CD8-positive, alpha-beta T cell (primary cell): ENCODE measurements at regions of chr6 and their contacts with region 1.

Region 1: DNA sequence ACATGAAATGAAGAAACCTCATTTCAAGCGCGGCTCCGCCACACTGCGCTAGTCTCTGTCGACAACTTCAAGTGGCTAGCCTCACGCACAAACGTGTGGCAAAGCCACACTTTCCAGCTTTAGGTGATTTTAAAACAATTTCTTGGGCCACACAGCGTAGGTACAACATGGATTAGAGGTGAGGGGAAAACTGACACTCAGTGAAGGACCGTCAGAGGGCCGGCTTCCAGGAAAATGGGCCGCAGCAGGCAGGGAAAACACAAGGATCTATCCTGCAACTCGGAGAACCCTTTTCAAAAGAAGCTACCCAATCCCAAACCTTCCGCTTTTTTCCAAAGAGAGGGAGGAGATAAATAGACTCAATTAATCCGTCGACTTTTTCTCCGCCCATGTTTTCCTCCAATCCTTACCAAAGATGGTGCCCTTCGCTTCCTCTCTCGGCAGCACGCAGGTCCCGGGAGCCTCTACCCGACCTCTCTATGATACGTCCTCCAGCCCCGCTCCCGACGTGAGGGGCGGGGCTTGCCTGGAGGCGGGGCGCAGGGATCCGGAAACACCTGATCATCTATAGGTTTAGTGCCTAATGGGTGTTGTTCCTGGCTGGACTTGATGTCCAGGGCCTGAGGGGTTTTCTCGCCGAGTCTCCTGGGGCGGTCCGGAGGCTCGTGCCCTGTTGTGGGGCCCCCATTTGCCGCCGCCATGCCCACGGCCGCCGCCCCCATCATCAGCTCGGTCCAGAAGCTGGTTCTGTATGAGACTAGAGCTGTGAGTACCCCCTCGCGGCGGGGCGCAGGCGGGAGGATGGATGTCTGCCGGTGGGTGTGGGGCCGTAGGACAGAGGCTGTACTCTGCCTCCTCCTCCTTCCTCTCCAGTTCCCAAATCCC is at the starts of genes AK9 and FIG4:
- DNase-seq: peak; percentile 68 to 93 (median 90)
- ATAC-seq: peak; percentile 96
- H3K4me3 ChIP-seq: peak within 1 kb of the TSS; percentile 85 to 91
- H3K4me3 Mint-ChIP-seq: peak within 1 kb of the TSS; percentile 93
- H3K27ac ChIP-seq: peak within 1 kb of the TSS; percentile 81 to 91
- H3K27ac Mint-ChIP-seq: peak within 1 kb of the TSS; percentile 98
- H3K4me1 ChIP-seq: peaks cover 22% of the 10 kb centered on the region
- H3K4me1 Mint-ChIP-seq: peaks cover 27% of the 10 kb centered on the region
- H3K27me3 ChIP-seq: no peaks in the 10 kb centered on the region
- H3K27me3 Mint-ChIP-seq: no peaks in the 10 kb centered on the region
- CTCF ChIP-seq: no peak
- total RNA-seq, gene AK9: 5.1 to 6.5 TPM
- total RNA-seq, gene FIG4: 2.3 TPM

Region 2: DNA sequence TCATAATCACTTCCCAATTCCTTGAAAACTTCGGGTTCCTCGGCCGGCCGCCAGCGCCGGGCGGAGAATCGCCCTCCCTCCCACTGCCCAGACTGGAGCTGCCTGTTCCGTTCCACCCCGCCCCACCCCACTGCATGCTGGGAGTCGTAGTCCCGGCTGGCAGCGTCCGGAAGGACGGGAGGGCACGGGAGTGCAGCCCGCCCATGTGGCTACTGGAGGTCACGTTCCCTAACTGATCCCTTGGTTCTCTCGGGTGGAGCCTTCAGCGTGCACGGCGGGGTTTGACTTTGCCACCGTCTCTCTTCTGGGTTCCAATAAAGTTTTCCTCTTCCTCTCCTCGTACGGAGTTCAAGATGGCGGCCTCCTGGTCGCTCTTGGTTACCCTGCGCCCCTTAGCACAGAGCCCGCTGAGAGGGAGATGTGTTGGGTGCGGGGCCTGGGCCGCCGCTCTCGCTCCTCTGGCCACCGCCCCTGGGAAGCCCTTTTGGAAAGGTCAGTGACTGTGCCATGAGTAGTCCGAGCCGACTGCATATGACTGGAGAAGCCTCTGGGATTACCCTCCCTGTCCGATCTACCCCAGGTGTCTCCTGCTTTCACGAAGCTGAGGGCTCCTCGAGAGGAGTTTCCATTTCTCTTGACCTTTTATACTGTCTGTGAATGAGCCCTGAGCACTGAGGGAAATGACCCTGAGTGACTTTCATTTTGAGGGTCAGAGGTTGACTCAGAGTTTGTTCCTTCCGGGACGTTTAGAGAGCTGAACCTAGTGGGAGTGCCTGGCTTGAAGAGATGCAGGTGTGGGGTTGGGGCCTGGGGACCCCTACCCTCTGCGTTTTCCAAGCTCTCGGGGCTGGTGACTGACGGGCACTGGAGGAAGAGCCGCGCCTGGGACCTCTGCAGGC is 1396.0 kb before region 1 on chr6 and contains the start of gene AFG1L:
- CTCF ChIA-PET with region 1: no interaction called
- POLR2A ChIA-PET with region 1: no interaction called
- intact Hi-C with region 1: loop called in 1 of 2 experiments (anchors 10 kb)
- DNase-seq: peak; percentile 72 to 92 (median 86)
- ATAC-seq: peak; percentile 92
- H3K4me3 ChIP-seq: peak within 1 kb of the TSS; percentile 94 to 96
- H3K4me3 Mint-ChIP-seq: peak within 1 kb of the TSS; percentile 89
- H3K27ac ChIP-seq: peak within 1 kb of the TSS; percentile 94 to 95
- H3K27ac Mint-ChIP-seq: peak within 1 kb of the TSS; percentile 97
- H3K4me1 ChIP-seq: peaks cover 13% of the 10 kb centered on the region
- H3K4me1 Mint-ChIP-seq: peaks cover 26% of the 10 kb centered on the region
- H3K27me3 ChIP-seq: no peaks in the 10 kb centered on the region
- H3K27me3 Mint-ChIP-seq: no peaks in the 10 kb centered on the region
- CTCF ChIP-seq: no peak
- total RNA-seq, gene AFG1L: 3.3 to 4.0 TPM

Region 3: DNA sequence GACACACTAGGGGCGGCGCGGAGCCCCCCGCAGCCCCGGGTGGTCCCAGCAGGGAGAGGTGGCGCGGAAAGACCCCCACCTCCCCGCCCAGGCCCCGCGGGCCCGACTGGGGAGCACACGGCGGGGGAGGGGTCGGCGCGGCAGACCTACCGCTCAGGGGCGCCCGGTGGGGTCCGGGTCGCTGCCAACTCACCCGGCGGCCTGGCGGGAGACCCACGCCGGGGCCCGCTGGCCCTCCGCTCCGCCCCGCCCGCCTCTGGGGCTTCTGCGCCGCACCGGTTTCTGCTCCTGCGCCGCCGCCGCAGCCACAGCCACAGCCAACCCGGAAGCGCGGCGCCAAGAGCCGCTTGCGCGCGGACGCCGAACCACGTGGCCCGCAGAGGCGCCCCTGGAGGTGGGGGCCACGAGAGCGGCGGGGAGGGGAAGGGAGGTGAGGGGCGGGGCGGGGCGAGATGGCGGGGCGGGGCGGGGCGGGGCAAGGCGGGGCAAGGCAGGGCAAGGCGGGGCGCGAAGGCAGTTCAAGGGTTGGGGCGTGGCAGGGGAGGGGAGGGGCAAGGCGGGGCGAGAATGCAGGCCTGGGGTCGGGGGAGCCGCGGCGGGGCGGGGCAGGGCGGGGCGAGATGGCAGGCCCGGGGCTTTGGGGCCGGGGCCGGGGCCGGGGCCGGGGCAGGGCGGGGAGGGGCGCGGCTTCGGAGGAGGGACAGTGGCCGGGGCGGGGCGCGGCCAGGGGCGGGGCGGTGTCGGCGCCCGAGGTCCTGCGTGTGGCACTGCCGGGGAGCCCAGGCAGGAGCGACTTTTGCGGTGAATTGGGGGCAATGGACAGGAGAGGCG is 207.9 kb before region 1 on chr6 and contains the start of gene ZBTB24:
- CTCF ChIA-PET with region 1: no interaction called
- POLR2A ChIA-PET with region 1: no interaction called
- intact Hi-C with region 1: loop called (anchors 1 to 2 kb)
- DNase-seq: peak; percentile 75 to 96 (median 88)
- ATAC-seq: peak; percentile 85
- H3K4me3 ChIP-seq: peak within 1 kb of the TSS; percentile 65 to 69
- H3K4me3 Mint-ChIP-seq: peak within 1 kb of the TSS; percentile 95
- H3K27ac ChIP-seq: peak within 1 kb of the TSS; percentile 49 to 62
- H3K27ac Mint-ChIP-seq: peak within 1 kb of the TSS; percentile 89
- H3K4me1 ChIP-seq: peaks cover 37% of the 10 kb centered on the region
- H3K4me1 Mint-ChIP-seq: peaks cover 50% of the 10 kb centered on the region
- H3K27me3 ChIP-seq: no peaks in the 10 kb centered on the region
- H3K27me3 Mint-ChIP-seq: no peaks in the 10 kb centered on the region
- CTCF ChIP-seq: no peak
- total RNA-seq, gene ZBTB24: 10.9 to 11.2 TPM

Region 4: GRCh38 chr6:109705258-109705657 is 14.3 kb after region 1 on chr6:
- CTCF ChIA-PET with region 1: interaction called, 8 read pairs
- POLR2A ChIA-PET with region 1: interaction called, 3 read pairs
- intact Hi-C with region 1: loop called in 1 of 2 experiments (anchors 1 kb)
- DNase-seq: peak; percentile 50 to 90 (median 72)
- ATAC-seq: peak; percentile 98
- H3K4me3 ChIP-seq: no peak overlapping the region
- H3K4me3 Mint-ChIP-seq: no peak overlapping the region
- H3K27ac ChIP-seq: no peak overlapping the region
- H3K27ac Mint-ChIP-seq: no peak overlapping the region
- H3K4me1 ChIP-seq: peaks cover 10% of the 10 kb centered on the region
- H3K4me1 Mint-ChIP-seq: peaks cover 27% of the 10 kb centered on the region
- H3K27me3 ChIP-seq: no peaks in the 10 kb centered on the region
- H3K27me3 Mint-ChIP-seq: no peaks in the 10 kb centered on the region
- CTCF ChIP-seq: peak; percentile 82

Region 5: DNA sequence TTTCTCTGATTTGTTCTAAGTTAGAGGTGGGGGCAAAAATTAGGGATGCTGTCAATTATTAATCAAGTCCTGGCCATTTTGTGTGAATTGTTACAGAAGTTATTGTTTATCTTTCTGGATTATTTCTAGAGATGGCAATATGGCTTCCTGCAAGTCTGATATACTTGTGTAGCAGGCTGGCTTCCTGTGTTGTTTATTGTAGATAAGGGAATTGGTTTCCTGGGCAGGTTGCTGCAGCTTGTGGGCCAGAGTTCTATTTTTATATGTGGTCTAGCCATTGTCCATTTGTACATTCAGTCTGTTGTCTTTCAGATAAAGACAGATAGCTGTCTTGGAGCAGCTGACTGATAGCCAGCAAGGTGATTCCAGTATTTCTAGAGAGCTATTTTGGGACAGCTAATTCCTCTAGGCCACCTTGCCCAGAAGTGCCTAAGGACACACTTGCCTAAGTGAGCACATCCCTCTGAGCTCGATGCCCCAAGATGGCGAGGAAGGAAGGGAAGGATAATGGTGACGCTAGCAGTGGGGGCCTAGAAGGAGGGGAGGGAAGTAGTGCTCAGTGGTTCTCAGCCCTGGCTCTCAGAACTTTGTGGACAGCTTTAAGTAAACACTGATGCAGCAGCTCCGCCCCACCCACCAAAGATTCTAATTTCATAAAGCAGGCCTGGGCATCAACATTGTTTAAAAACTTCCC is 698.9 kb after region 1 on chr6:
- CTCF ChIA-PET with region 1: interaction called, 13 read pairs
- POLR2A ChIA-PET with region 1: no interaction called
- intact Hi-C with region 1: no loop called
- DNase-seq: peak in 3 of 9 experiments; percentile 14 to 53 (median 36)
- ATAC-seq: peak; percentile 45
- H3K4me3 ChIP-seq: no peak overlapping the region
- H3K4me3 Mint-ChIP-seq: peak overlapping the region; percentile 35
- H3K27ac ChIP-seq: peak overlapping the region in 1 of 2 experiments; percentile 26
- H3K27ac Mint-ChIP-seq: peak overlapping the region; percentile 93
- H3K4me1 ChIP-seq: peaks cover 33% of the 10 kb centered on the region
- H3K4me1 Mint-ChIP-seq: peaks cover 39% of the 10 kb centered on the region
- H3K27me3 ChIP-seq: no peaks in the 10 kb centered on the region
- H3K27me3 Mint-ChIP-seq: no peaks in the 10 kb centered on the region
- CTCF ChIP-seq: no peak

Region 6: DNA sequence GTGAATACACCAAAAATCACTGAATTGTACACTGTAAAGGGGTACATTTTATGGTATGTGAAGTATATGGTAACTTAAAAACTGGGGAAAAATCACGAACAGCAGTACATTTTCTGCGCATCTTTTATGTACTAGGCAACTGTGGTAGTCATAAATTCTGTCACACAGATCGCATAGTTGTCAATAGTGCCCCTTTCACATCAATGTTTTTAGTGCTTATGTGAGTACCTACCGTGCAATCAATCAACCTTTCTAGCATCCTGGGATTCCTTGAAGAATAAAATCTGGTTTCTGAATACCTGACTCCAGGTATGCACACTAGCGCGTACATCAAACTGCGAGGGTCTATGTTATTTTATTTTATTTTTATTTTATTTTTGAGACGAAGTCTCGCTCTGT is 1290.2 kb after region 1 on chr6:
- CTCF ChIA-PET with region 1: no interaction called
- POLR2A ChIA-PET with region 1: no interaction called
- intact Hi-C with region 1: no loop called
- DNase-seq: peak in 1 of 9 experiments; percentile 49
- ATAC-seq: peak; percentile 1
- H3K4me3 ChIP-seq: peak overlapping the region; percentile 85 to 95
- H3K4me3 Mint-ChIP-seq: peak overlapping the region; percentile 99
- H3K27ac ChIP-seq: peak overlapping the region; percentile 90 to 97
- H3K27ac Mint-ChIP-seq: peak overlapping the region; percentile 100
- H3K4me1 ChIP-seq: peaks cover 6% of the 10 kb centered on the region
- H3K4me1 Mint-ChIP-seq: peaks cover 45% of the 10 kb centered on the region
- H3K27me3 ChIP-seq: no peaks in the 10 kb centered on the region
- H3K27me3 Mint-ChIP-seq: no peaks in the 10 kb centered on the region
- CTCF ChIP-seq: no peak